Psoas muscle (tissue), 8 donors: ENCODE measurements at regions of chr6 and their contacts with region 1.

Region 1: GRCh38 chr6:137271245-137272183 is 52.3 kb upstream of the IFNGR1 start:
- DNase-seq: no peak
- ATAC-seq: peak in 3 of 4 donors; percentile 70 to 84 (median 76)
- H3K4me3 ChIP-seq: no peak overlapping the region
- H3K27ac ChIP-seq: no peak overlapping the region
- H3K4me1 ChIP-seq: no peaks in the 10 kb centered on the region
- H3K27me3 ChIP-seq: no peaks in the 10 kb centered on the region
- CTCF ChIP-seq: peak; percentile 93

Region 2: GRCh38 chr6:137291441-137291840 is 19.9 kb after region 1 on chr6:
- intact Hi-C with region 1: no loop called
- DNase-seq: no peak
- ATAC-seq: no peak
- H3K4me3 ChIP-seq: no peak overlapping the region
- H3K27ac ChIP-seq: no peak overlapping the region
- H3K4me1 ChIP-seq: no peaks in the 10 kb centered on the region
- H3K27me3 ChIP-seq: peaks cover 0 to 4% (median 0%) of the 10 kb centered on the region in 3 donors
- CTCF ChIP-seq: no peak

Region 3: GRCh38 chr6:137313928-137314855 is 42.7 kb after region 1 on chr6:
- intact Hi-C with region 1: loop called (anchors 2 to 5 kb)
- DNase-seq: peak; percentile 68 to 79
- ATAC-seq: peak; percentile 70 to 95 (median 79)
- H3K4me3 ChIP-seq: peak overlapping the region; percentile 34
- H3K27ac ChIP-seq: no peak overlapping the region
- H3K4me1 ChIP-seq: no peaks in the 10 kb centered on the region
- H3K27me3 ChIP-seq: no peaks in the 10 kb centered on the region
- CTCF ChIP-seq: peak; percentile 78

Region 4: GRCh38 chr6:137370871-137371633 is 99.5 kb after region 1 on chr6:
- intact Hi-C with region 1: no loop called
- DNase-seq: no peak
- ATAC-seq: no peak
- H3K4me3 ChIP-seq: no peak overlapping the region
- H3K27ac ChIP-seq: no peak overlapping the region
- H3K4me1 ChIP-seq: no peaks in the 10 kb centered on the region
- H3K27me3 ChIP-seq: no peaks in the 10 kb centered on the region
- CTCF ChIP-seq: no peak

Region 5: GRCh38 chr6:137415127-137415833 is 143.8 kb after region 1 on chr6:
- intact Hi-C with region 1: loop called (anchors 5 kb)
- DNase-seq: peak in 1 of 2 donors; percentile 27
- ATAC-seq: peak; percentile 74 to 96 (median 84)
- H3K4me3 ChIP-seq: peak overlapping the region; percentile 70
- H3K27ac ChIP-seq: no peak overlapping the region
- H3K4me1 ChIP-seq: peaks cover 7% of the 10 kb centered on the region
- H3K27me3 ChIP-seq: no peaks in the 10 kb centered on the region
- CTCF ChIP-seq: peak; percentile 58